Mammary epithelial cell (primary cell): ENCODE measurements at regions of chr5 and their contacts with region 1.

Region 1: GRCh38 chr5:149011074-149011476 is 51.8 kb downstream of the SH3TC2 start:
- DNase-seq: peak; percentile 89
- H3K4me3 ChIP-seq: no peak overlapping the region
- H3K27ac ChIP-seq: peak overlapping the region; percentile 56
- H3K4me1 ChIP-seq: peaks cover 21% of the 10 kb centered on the region
- H3K27me3 ChIP-seq: no peaks in the 10 kb centered on the region
- CTCF ChIP-seq: no peak

Region 2: DNA sequence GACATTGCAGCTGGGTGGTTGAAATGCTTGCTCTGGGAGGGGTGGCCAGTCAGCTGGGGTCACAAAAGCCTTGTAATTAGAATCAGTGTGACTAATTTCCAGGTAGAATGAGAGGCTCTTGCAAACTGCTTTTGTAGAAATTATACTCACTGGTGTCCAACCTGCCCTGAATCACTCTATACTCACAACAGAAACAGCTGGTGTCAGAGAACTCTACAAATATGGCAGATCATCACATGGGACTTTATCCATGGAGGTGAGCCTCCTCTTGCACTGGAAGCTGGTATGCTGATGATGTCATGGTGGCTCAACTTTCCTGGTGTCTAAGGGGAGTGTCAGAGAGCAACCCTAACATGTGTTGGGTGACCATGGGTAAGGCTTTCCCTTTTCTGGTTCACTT is 19.5 kb before region 1 on chr5:
- CTCF ChIA-PET with region 1: no interaction called
- dilution Hi-C with region 1: no loop called
- in situ Hi-C with region 1: no loop called
- intact Hi-C with region 1: loop called (anchors 1 kb)
- DNase-seq: peak; percentile 83
- H3K4me3 ChIP-seq: no peak overlapping the region
- H3K27ac ChIP-seq: peak overlapping the region; percentile 56
- H3K4me1 ChIP-seq: peaks cover 41% of the 10 kb centered on the region
- H3K27me3 ChIP-seq: no peaks in the 10 kb centered on the region
- CTCF ChIP-seq: no peak